B cell (primary cell): ENCODE measurements at regions of chr11 and their contacts with region 1.

Region 1: GRCh38 chr11:14764579-14765527 is 121.2 kb downstream of the PDE3B start:
- DNase-seq: peak; percentile 81
- ATAC-seq: peak; percentile 88
- H3K4me3 ChIP-seq: peak overlapping the region in 1 of 5 experiments; percentile 0
- H3K4me3 Mint-ChIP-seq: peak overlapping the region; percentile 30
- H3K27ac ChIP-seq: peak overlapping the region; percentile 1 to 8
- H3K27ac Mint-ChIP-seq: peak overlapping the region; percentile 7
- H3K4me1 ChIP-seq: peaks cover 17 to 25% of the 10 kb centered on the region in 2 donors
- H3K4me1 Mint-ChIP-seq: peaks cover 18% of the 10 kb centered on the region
- H3K27me3 ChIP-seq: peaks cover 0 to 6% (median 5%) of the 10 kb centered on the region in 4 experiments
- H3K27me3 Mint-ChIP-seq: no peaks in the 10 kb centered on the region
- CTCF ChIP-seq: no peak

Region 2: DNA sequence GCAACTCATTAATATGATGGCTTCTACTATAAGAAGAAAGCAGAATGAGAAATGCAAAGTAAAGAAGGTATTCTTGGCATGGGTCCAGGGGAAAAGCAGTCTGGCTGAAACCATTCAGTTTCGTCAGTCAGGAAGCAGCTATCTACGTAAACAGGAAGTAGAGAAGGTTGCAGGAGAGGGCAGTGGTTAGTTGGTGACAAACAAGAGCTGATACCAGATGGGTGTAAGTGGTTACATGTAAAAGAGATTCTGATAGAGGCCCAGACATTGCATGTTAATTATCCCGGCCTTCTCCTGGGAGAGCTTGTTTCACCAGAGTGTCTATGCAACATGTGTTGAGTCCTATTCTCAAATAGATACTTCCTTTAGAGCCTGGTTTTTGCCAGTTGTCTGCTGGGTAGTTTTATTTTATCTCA is 186.3 kb before region 1 on chr11:
- CTCF ChIA-PET with region 1: no interaction called
- POLR2A ChIA-PET with region 1: no interaction called
- intact Hi-C with region 1: loop called (anchors 2 kb)
- DNase-seq: peak; percentile 90
- ATAC-seq: peak; percentile 99
- H3K4me3 ChIP-seq: peak overlapping the region in 1 of 5 experiments; percentile 18
- H3K4me3 Mint-ChIP-seq: peak overlapping the region; percentile 51
- H3K27ac ChIP-seq: peak overlapping the region; percentile 59 to 71
- H3K27ac Mint-ChIP-seq: peak overlapping the region; percentile 85
- H3K4me1 ChIP-seq: peaks cover 13 to 22% of the 10 kb centered on the region in 2 donors
- H3K4me1 Mint-ChIP-seq: peaks cover 37% of the 10 kb centered on the region
- H3K27me3 ChIP-seq: no peaks in the 10 kb centered on the region
- H3K27me3 Mint-ChIP-seq: peaks cover 4% of the 10 kb centered on the region
- CTCF ChIP-seq: no peak